A673 (cell line): ENCODE measurements at regions of chr21 and their contacts with region 1.

Region 1: GRCh38 chr21:31180256-31181081 is 142.2 kb upstream of the KRTAP19-8 start:
- DNase-seq: peak; percentile 64
- H3K4me3 ChIP-seq: no peak overlapping the region
- H3K27ac ChIP-seq: no peak overlapping the region
- H3K4me1 ChIP-seq: no peaks in the 10 kb centered on the region
- H3K27me3 ChIP-seq: no peaks in the 10 kb centered on the region
- CTCF ChIP-seq: peak; percentile 69

Region 2: DNA sequence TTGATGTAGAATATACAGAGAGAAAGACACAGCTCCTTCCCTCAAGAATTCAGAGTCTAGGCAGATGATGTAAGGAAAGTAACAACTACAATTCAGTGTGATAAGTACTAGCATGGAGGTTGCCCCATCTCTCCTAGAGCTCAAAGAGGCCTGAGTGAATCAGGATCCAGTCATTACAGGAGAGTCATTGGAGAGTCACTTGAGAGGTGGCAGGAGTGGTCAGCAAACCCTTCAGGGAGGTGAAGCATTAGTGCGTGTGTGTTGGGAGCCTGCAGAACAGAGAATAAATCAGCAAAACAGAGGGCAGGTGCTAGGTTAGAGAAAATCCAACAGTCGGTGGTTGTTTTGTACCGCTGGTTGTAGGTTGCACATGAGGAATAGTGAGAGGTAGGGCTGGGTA is 1286.8 kb before region 1 on chr21:
- CTCF ChIA-PET with region 1: no interaction called
- POLR2A ChIA-PET with region 1: no interaction called
- intact Hi-C with region 1: no loop called
- DNase-seq: no peak
- H3K4me3 ChIP-seq: no peak overlapping the region
- H3K27ac ChIP-seq: no peak overlapping the region
- H3K4me1 ChIP-seq: peaks cover 6% of the 10 kb centered on the region
- H3K27me3 ChIP-seq: no peaks in the 10 kb centered on the region
- CTCF ChIP-seq: no peak

Region 3: GRCh38 chr21:31078796-31079195 is 101.7 kb before region 1 on chr21:
- CTCF ChIA-PET with region 1: no interaction called
- POLR2A ChIA-PET with region 1: no interaction called
- intact Hi-C with region 1: no loop called
- DNase-seq: no peak
- H3K4me3 ChIP-seq: no peak overlapping the region
- H3K27ac ChIP-seq: no peak overlapping the region
- H3K4me1 ChIP-seq: no peaks in the 10 kb centered on the region
- H3K27me3 ChIP-seq: no peaks in the 10 kb centered on the region
- CTCF ChIP-seq: no peak

Region 4: DNA sequence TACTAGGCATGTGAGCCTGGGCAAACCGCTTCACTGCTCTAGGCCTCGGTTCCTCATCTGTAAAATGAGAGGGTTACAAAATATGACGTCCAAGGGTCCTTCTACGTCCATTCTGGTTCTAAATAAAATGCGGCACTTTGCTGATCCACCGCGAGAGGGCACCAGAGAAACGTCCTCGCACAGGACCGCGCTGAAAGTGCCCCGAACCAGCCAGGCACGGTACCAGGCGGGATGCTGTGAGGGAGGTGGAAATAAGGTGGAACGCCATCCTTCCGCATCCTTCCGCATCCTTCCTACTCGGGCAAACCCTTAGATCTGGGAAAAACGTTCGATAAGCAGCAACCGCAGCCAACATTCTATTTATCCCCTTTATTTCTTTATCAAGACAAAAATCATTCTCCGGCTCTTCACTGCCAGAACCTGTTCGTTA is 81.9 kb before region 1 on chr21:
- CTCF ChIA-PET with region 1: interaction called, 4 read pairs
- POLR2A ChIA-PET with region 1: no interaction called
- intact Hi-C with region 1: loop called (anchors 2 kb)
- DNase-seq: peak; percentile 62
- H3K4me3 ChIP-seq: no peak overlapping the region
- H3K27ac ChIP-seq: no peak overlapping the region
- H3K4me1 ChIP-seq: no peaks in the 10 kb centered on the region
- H3K27me3 ChIP-seq: no peaks in the 10 kb centered on the region
- CTCF ChIP-seq: peak; percentile 92

Region 5: DNA sequence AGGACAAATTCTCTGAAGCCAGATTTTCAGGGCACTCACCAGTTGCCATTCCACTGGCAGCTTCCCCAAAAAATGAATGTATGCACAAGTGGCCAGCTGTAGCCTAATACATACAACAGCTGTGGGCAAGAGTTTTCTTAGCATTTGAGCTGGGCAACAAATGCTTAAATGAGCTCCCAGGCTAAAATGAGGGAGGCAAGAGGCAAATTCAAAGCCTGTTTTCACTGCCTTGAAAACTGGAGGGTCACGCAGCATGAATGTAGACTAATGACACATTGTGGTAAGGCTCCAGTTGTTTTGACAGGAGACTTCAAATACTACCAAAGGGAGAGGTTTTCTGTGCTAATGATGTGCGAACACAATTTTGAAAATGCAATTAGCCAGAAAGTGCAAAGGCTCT is 75.4 kb after region 1 on chr21:
- CTCF ChIA-PET with region 1: no interaction called
- POLR2A ChIA-PET with region 1: no interaction called
- intact Hi-C with region 1: no loop called
- DNase-seq: no peak
- H3K4me3 ChIP-seq: no peak overlapping the region
- H3K27ac ChIP-seq: no peak overlapping the region
- H3K4me1 ChIP-seq: no peaks in the 10 kb centered on the region
- H3K27me3 ChIP-seq: no peaks in the 10 kb centered on the region
- CTCF ChIP-seq: no peak

Region 6: GRCh38 chr21:32674731-32675130 is 1494.3 kb after region 1 on chr21:
- CTCF ChIA-PET with region 1: interaction called, 10 read pairs
- POLR2A ChIA-PET with region 1: no interaction called
- intact Hi-C with region 1: no loop called
- DNase-seq: no peak
- H3K4me3 ChIP-seq: no peak overlapping the region
- H3K27ac ChIP-seq: no peak overlapping the region
- H3K4me1 ChIP-seq: no peaks in the 10 kb centered on the region
- H3K27me3 ChIP-seq: no peaks in the 10 kb centered on the region
- CTCF ChIP-seq: no peak